ENCODE measurements at regions of chr5 and their contacts with region 1.

Region 1: DNA sequence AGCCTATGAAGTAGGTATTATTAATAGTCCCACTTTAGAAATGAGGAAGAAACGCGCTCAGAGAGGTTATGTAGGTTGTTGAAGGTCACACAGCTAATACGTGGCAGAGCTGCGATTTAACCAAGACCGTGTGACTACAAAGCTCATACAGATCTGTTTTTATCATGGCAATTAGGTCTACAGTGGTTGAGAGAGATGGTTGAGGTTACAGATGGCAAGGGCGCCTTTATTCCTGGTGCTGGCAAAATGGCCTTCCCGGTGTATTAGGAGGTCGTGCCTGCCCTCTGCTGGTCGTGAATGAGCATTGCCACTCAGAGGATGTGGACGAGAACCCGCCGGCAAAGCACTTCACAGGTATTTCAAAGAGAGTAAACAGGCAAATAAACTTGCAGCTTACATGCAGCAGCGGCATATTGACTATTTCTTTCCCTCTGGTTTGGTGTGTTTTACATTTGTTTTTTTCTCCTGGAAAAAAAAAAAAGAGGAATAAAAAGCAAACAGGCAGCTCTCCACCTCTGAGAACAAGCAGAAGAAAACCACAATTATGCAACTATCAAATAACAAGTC is 65.3 kb upstream of the EGFLAM start:
- DNase-seq: peak; percentile 46 to 75 (median 62)
- ATAC-seq: peak; percentile 97
- H3K4me3 ChIP-seq: no peak overlapping the region
- H3K27ac ChIP-seq: no peak overlapping the region
- H3K4me1 ChIP-seq: no peaks in the 10 kb centered on the region
- H3K27me3 ChIP-seq: peaks cover 8 to 53% of the 10 kb centered on the region in 2 donors
- CTCF ChIP-seq: peak; percentile 80 to 82

Region 2: DNA sequence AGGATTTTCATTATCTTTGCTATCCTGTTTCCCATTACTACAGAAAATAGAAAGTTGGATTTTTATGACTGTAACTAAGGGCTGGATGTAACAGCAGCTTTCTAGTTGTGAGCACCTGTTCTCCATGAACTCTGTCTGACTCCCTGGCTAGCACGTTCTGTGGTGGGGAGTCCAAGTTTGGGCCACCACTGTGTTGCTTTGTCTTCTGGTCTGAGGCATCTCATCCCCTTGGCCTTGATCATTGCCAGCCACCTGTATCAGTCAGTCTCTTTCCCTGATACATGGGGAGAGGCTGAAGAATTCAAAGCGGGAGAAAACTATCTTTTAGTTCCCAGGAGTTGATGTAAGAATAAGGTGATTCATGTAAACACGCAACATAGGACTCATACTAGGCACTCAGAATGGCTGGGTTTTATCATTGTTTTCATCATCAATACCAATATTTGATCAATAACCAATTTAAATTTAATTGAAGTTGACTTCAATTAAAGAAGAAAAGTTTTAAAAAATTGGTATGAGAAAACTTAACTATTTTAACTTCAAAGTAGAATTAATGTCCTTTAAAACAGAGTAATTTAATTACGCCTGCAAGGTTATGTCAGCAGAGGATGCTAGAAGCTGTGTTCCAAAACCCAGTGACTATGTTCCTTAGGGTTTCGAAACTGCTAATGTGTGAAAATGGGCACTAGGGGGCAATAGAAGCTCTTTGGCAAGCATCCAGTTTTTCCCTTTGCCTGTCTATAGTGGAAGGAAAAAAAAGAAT is 780.4 kb before region 1 on chr5:
- intact Hi-C with region 1: loop called in 1 of 2 experiments (anchors 10 kb)
- DNase-seq: peak in 2 of 4 donors; percentile 57 to 74
- ATAC-seq: peak; percentile 95
- H3K4me3 ChIP-seq: no peak overlapping the region
- H3K27ac ChIP-seq: no peak overlapping the region
- H3K4me1 ChIP-seq: no peaks in the 10 kb centered on the region
- H3K27me3 ChIP-seq: no peaks in the 10 kb centered on the region
- CTCF ChIP-seq: peak; percentile 66 to 88

Region 3: GRCh38 chr5:37837414-37838032 is 355.6 kb before region 1 on chr5:
- intact Hi-C with region 1: loop called in 1 of 2 experiments (anchors 5 kb)
- DNase-seq: peak in 3 of 4 donors; percentile 64 to 88 (median 73)
- ATAC-seq: peak; percentile 92
- H3K4me3 ChIP-seq: no peak overlapping the region
- H3K27ac ChIP-seq: no peak overlapping the region
- H3K4me1 ChIP-seq: peaks cover 19 to 48% of the 10 kb centered on the region in 2 donors
- H3K27me3 ChIP-seq: peaks cover 98 to 100% of the 10 kb centered on the region in 2 donors
- CTCF ChIP-seq: peak; percentile 64 to 77

Measured in left lung (tissue), 14 donors.